T-cell (primary cell): ENCODE measurements at regions of chr9 and their contacts with region 1.

Region 1: GRCh38 chr9:114587385-114588202 is at the start of gene ATP6V1G1:
- DNase-seq: peak; percentile 94 to 100 (median 99)
- ATAC-seq: peak; percentile 89 to 93 (median 92)
- H3K4me3 ChIP-seq: peak within 1 kb of the TSS; percentile 84 to 95
- H3K4me3 Mint-ChIP-seq: peak within 1 kb of the TSS; percentile 97 to 100 (median 100)
- H3K27ac ChIP-seq: peak within 1 kb of the TSS; percentile 92
- H3K27ac Mint-ChIP-seq: peak within 1 kb of the TSS; percentile 99 to 100
- H3K4me1 ChIP-seq: peaks cover 28 to 45% of the 10 kb centered on the region in 2 experiments
- H3K4me1 Mint-ChIP-seq: peaks cover 44 to 54% (median 50%) of the 10 kb centered on the region in 3 donors
- H3K27me3 ChIP-seq: no peaks in the 10 kb centered on the region
- H3K27me3 Mint-ChIP-seq: no peaks in the 10 kb centered on the region
- total RNA-seq, gene ATP6V1G1: 99.2 to 109 (median 103) TPM

Region 2: DNA sequence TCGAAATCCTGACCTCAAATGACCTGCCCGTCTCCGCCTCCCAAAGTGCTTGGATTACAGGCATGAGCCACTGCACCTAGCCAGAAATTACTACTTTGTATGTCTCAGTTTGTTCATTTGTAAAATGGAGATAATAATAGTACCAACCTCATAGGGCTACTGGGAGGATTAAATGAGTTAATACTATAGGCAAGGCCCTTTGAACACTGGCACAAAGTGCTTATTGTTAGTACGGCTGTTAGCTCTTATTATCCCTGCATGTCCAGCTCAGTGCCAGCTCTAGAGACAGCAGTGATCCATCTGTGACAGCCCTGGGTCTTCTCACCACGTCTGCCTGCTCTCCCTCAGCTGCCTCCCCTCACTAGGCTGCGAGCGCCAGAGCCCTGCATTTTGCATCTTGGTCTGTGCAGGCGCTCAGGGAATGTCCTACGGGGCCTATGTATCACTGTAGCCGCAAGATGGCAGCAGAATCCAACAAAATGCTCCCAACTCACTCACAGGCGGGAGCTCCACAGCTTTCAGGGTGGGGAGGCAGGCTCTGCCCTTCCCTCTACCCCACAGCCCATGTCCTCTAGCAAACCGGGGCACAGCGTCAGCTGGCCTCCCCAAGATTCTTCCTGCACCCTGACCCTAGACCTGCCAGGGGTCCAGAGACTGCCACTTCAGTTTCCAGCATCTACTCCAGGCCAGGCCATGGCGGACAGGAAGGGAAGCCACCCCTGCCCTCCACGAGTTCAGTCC is 182.1 kb before region 1 on chr9:
- CTCF ChIA-PET with region 1: interaction called, 4 to 17 read pairs
- POLR2A ChIA-PET with region 1: interaction called in 1 of 2 experiments, 3 read pairs
- DNase-seq: peak; percentile 57 to 91 (median 76)
- ATAC-seq: peak; percentile 93 to 100 (median 97)
- H3K4me3 ChIP-seq: no peak overlapping the region
- H3K4me3 Mint-ChIP-seq: no peak overlapping the region
- H3K27ac ChIP-seq: no peak overlapping the region
- H3K27ac Mint-ChIP-seq: peak overlapping the region; percentile 62 to 68
- H3K4me1 ChIP-seq: peaks cover 0 to 10% of the 10 kb centered on the region in 2 experiments
- H3K4me1 Mint-ChIP-seq: peaks cover 6 to 8% (median 6%) of the 10 kb centered on the region in 3 donors
- H3K27me3 ChIP-seq: no peaks in the 10 kb centered on the region
- H3K27me3 Mint-ChIP-seq: no peaks in the 10 kb centered on the region

Region 3: DNA sequence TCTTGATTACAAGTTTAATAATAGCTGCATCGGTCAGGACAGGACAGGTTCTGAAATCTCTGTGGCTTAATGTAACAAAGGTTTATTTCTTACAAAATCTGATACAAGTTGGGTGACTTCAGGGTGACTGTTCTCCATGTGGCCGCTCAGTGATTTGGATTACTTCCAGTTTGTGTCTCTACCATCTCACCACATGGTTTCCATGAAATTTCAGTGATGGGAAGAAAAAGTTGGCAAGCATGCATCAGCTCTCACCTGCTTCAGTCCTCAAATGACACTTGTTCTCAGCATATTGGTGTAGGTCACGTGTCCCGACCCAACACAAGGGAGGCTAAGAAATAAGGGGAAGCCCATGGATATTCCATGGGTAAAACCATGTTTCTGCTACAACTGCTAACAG is 15.7 kb after region 1 on chr9:
- CTCF ChIA-PET with region 1: interaction called in 1 of 2 experiments, 10 read pairs
- POLR2A ChIA-PET with region 1: interaction called, 4 to 8 read pairs
- DNase-seq: no peak
- ATAC-seq: no peak
- H3K4me3 ChIP-seq: no peak overlapping the region
- H3K4me3 Mint-ChIP-seq: no peak overlapping the region
- H3K27ac ChIP-seq: no peak overlapping the region
- H3K27ac Mint-ChIP-seq: peak overlapping the region in 1 of 2 donors; percentile 13
- H3K4me1 ChIP-seq: no peaks in the 10 kb centered on the region
- H3K4me1 Mint-ChIP-seq: peaks cover 2 to 17% (median 5%) of the 10 kb centered on the region in 3 donors
- H3K27me3 ChIP-seq: no peaks in the 10 kb centered on the region
- H3K27me3 Mint-ChIP-seq: no peaks in the 10 kb centered on the region

Region 4: GRCh38 chr9:114611516-114612271 is 24.1 kb after region 1 on chr9:
- CTCF ChIA-PET with region 1: interaction called, 3 to 13 read pairs
- POLR2A ChIA-PET with region 1: interaction called, 3 to 14 read pairs
- DNase-seq: peak in 29 of 35 experiments; percentile 2 to 59 (median 39)
- ATAC-seq: peak; percentile 74 to 78 (median 76)
- H3K4me3 ChIP-seq: peak overlapping the region; percentile 85 to 86
- H3K4me3 Mint-ChIP-seq: peak overlapping the region; percentile 88 to 90 (median 88)
- H3K27ac ChIP-seq: peak overlapping the region; percentile 79
- H3K27ac Mint-ChIP-seq: peak overlapping the region; percentile 91 to 95
- H3K4me1 ChIP-seq: peaks cover 18 to 32% of the 10 kb centered on the region in 2 experiments
- H3K4me1 Mint-ChIP-seq: peaks cover 46 to 63% (median 54%) of the 10 kb centered on the region in 3 donors
- H3K27me3 ChIP-seq: no peaks in the 10 kb centered on the region
- H3K27me3 Mint-ChIP-seq: no peaks in the 10 kb centered on the region

Region 5: DNA sequence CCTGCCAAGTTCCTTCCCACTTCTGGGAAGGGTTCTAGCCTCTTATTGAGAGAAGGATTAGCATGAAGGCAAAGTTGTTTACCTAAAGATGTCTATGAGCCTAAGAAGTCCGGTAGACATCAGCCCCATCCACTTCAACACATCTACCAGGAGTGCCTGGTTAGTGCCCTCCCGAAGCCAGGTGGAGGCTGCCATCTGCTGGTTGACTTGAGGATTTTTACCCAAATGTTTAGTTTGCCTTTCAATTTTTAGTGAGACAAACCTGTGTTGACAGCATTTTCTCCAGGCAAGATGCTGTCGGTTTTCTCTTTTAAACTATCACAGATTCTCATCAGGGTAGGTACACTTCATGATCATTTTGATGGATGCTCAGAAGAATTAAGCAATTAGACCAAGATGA is 426.4 kb after region 1 on chr9:
- CTCF ChIA-PET with region 1: no interaction called
- POLR2A ChIA-PET with region 1: no interaction called
- DNase-seq: peak; percentile 55 to 88 (median 74)
- ATAC-seq: peak; percentile 80 to 91 (median 88)
- H3K4me3 ChIP-seq: no peak overlapping the region
- H3K4me3 Mint-ChIP-seq: no peak overlapping the region
- H3K27ac ChIP-seq: no peak overlapping the region
- H3K27ac Mint-ChIP-seq: peak overlapping the region in 1 of 2 donors; percentile 28
- H3K4me1 ChIP-seq: peaks cover 0 to 5% of the 10 kb centered on the region in 2 experiments
- H3K4me1 Mint-ChIP-seq: peaks cover 17 to 19% (median 18%) of the 10 kb centered on the region in 3 donors
- H3K27me3 ChIP-seq: peaks cover 0 to 4% of the 10 kb centered on the region in 2 experiments
- H3K27me3 Mint-ChIP-seq: peaks cover 0 to 7% of the 10 kb centered on the region in 2 donors